HCT116 (cell line): ENCODE measurements at regions of chr2 and their contacts with region 1.

Region 1: DNA sequence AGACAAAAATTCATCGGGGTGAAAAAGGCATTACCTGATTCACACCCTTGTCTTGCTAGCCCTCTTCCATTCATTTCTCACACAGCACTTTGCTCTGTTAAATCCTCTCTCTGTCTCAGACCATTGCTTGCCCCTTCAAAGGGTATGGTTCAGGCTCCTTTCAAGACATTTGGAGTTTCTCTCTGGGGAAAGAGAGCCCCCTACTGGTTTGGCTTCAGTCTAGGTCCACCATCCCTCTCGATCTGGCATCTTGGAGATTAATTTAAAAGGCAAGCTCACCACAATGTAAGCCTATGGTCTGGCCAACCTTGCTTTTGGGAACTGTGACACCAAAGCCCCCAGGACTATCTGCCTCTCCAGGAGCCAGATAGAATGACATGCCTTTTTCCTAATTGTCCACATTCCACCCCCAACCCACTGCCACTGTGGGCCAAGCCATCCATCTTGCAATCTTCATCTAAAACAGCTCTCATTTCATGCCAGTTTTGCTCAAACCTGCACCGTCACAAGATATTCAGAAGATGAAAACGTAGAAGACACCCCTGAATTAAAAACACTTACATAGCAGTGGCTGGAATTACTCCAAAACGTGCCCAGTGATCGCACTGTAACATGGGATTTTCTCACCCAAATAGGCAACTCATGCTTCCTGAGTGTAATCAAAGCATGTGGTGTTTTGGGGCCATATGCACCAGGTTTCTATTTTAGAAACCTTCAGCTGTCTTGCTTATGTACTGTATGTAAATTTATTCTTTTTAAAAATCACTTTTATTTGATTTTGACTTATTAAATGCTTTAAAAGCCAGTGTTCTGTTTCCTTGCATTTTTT is 93.9 kb downstream of the FARSB start:
- DNase-seq: peak; percentile 39
- ATAC-seq: peak; percentile 79
- H3K4me3 ChIP-seq: no peak overlapping the region
- H3K27ac ChIP-seq: no peak overlapping the region
- H3K4me1 ChIP-seq: no peaks in the 10 kb centered on the region
- H3K27me3 ChIP-seq: no peaks in the 10 kb centered on the region
- CTCF ChIP-seq: peak; percentile 55 to 69 (median 64); a peak in 5 of 6 replicates
- POLR2A ChIP-seq: no peak
- RAD21 ChIP-seq: peak; percentile 79

Region 2: DNA sequence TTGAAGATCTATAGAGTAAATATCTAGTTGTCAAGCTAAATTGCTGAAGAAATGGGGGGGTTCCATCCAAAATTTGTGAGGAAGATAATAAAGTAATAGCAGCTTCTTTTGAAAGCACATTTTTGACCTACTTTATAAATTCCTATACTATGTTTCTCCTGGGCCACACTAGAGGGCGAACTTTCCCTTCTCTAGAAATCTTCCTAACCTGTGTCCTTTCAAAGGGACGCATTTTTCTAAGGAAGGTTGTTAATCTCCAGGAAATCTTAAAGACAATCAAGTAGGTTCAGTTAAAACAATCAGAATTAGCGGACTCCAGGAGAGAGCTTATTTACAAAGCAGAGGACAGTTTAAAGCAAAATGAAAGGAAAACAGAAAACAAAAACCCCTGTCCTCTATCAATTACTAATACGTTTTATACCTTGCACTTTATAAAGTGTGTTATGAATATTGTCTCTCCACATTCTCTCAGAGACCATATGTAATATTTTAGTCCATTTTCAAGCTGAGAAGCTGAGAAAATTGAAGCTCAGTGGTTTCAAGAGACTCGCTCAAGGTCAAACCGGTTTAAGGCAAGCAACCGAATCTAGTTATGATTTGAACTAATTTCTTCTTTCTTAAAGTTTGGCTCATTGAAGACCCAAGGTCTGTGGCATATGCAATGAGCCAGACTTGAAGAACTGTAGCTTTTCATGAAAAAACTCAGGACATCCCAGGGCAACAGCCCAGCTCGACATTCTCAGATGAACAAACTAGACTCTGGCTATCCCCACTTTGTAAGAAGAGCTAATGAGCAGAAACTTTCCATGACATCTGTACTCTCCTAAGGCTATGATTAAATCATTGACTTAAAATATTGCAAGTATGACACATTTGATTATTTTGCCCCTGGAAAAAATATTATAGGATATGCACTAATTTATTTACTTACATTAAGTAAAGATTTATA is 536.8 kb before region 1 on chr2:
- CTCF ChIA-PET with region 1: interaction called, 10 read pairs
- POLR2A ChIA-PET with region 1: no interaction called
- RAD21 ChIA-PET with region 1: no interaction called
- intact Hi-C with region 1: no loop called
- DNase-seq: peak; percentile 39
- ATAC-seq: peak; percentile 81
- H3K4me3 ChIP-seq: no peak overlapping the region
- H3K27ac ChIP-seq: no peak overlapping the region
- H3K4me1 ChIP-seq: no peaks in the 10 kb centered on the region
- H3K27me3 ChIP-seq: peaks cover 7% of the 10 kb centered on the region; the same call in 1 of the 2 replicates
- CTCF ChIP-seq: peak; percentile 50 to 78 (median 71); a peak in 5 of 6 replicates
- POLR2A ChIP-seq: no peak
- RAD21 ChIP-seq: peak; percentile 68

Region 3: GRCh38 chr2:222038067-222038802 is 523.8 kb before region 1 on chr2:
- CTCF ChIA-PET with region 1: interaction called, 10 read pairs
- POLR2A ChIA-PET with region 1: no interaction called
- RAD21 ChIA-PET with region 1: no interaction called
- intact Hi-C with region 1: loop called (anchors 5 kb)
- DNase-seq: no peak
- ATAC-seq: no peak
- H3K4me3 ChIP-seq: no peak overlapping the region
- H3K27ac ChIP-seq: no peak overlapping the region
- H3K4me1 ChIP-seq: no peaks in the 10 kb centered on the region
- H3K27me3 ChIP-seq: peaks cover 11% of the 10 kb centered on the region; the same call in 1 of the 2 replicates
- CTCF ChIP-seq: peak in 2 of 3 experiments; percentile 36 to 57; a peak in 3 of 6 replicates
- POLR2A ChIP-seq: no peak
- RAD21 ChIP-seq: peak; percentile 43

Region 4: DNA sequence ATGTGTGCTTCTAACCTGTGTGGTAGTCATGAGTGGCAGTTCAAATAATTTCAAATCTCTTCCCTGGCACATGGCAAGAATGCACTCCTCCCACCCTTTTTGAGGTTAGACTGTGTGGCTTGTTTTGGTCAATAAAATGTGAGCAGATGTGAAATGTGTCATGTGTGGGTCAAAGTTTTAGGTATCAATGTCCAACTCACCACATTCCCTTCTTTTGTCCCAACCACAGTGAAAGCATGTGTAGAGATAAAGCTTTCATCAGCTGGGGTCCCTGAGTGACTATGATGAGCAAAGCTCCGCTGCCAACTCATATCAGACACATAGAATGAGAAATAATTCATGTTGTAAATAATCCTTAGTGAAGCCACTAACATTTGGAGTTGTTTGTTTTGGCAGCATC is 381.4 kb before region 1 on chr2:
- CTCF ChIA-PET with region 1: no interaction called
- POLR2A ChIA-PET with region 1: no interaction called
- RAD21 ChIA-PET with region 1: no interaction called
- intact Hi-C with region 1: no loop called
- DNase-seq: no peak
- ATAC-seq: no peak
- H3K4me3 ChIP-seq: no peak overlapping the region
- H3K27ac ChIP-seq: no peak overlapping the region
- H3K4me1 ChIP-seq: no peaks in the 10 kb centered on the region
- H3K27me3 ChIP-seq: peaks cover 49% of the 10 kb centered on the region
- CTCF ChIP-seq: no peak
- POLR2A ChIP-seq: no peak
- RAD21 ChIP-seq: no peak

Region 5: GRCh38 chr2:222318026-222318711 is 243.9 kb before region 1 on chr2:
- CTCF ChIA-PET with region 1: interaction called, 55 read pairs
- POLR2A ChIA-PET with region 1: interaction called, 4 read pairs
- RAD21 ChIA-PET with region 1: interaction called, 7 to 13 read pairs
- intact Hi-C with region 1: loop called (anchors 1 kb)
- DNase-seq: peak; percentile 35
- ATAC-seq: peak; percentile 98
- H3K4me3 ChIP-seq: peak overlapping the region; percentile 36 to 58
- H3K27ac ChIP-seq: no peak overlapping the region
- H3K4me1 ChIP-seq: peaks cover 0 to 8% of the 10 kb centered on the region in 2 experiments; a peak in 2 of 4 replicates
- H3K27me3 ChIP-seq: peaks cover 28% of the 10 kb centered on the region
- CTCF ChIP-seq: peak; percentile 39 to 74 (median 54)
- POLR2A ChIP-seq: no peak
- RAD21 ChIP-seq: peak; percentile 86

Region 6: GRCh38 chr2:223692191-223692947 is 1130.3 kb after region 1 on chr2:
- CTCF ChIA-PET with region 1: no interaction called
- POLR2A ChIA-PET with region 1: no interaction called
- RAD21 ChIA-PET with region 1: no interaction called
- intact Hi-C with region 1: no loop called
- DNase-seq: peak; percentile 59
- ATAC-seq: peak; percentile 85
- H3K4me3 ChIP-seq: no peak overlapping the region
- H3K27ac ChIP-seq: peak overlapping the region; percentile 4; the same call in 1 of the 2 replicates
- H3K4me1 ChIP-seq: peaks cover 34 to 51% of the 10 kb centered on the region in 2 experiments
- H3K27me3 ChIP-seq: no peaks in the 10 kb centered on the region
- CTCF ChIP-seq: peak; percentile 71 to 77 (median 72)
- POLR2A ChIP-seq: no peak
- RAD21 ChIP-seq: peak; percentile 86